Aorta (tissue), 5 donors: ENCODE measurements at regions of chr3 and their contacts with region 1.

Region 1: GRCh38 chr3:13895155-13896105 is 15.6 kb upstream of the WNT7A start:
- DNase-seq: peak; percentile 96 to 99
- ATAC-seq: peak; percentile 98
- H3K4me3 ChIP-seq: peak overlapping the region; percentile 32 to 72
- H3K27ac ChIP-seq: no peak overlapping the region
- H3K4me1 ChIP-seq: no peaks in the 10 kb centered on the region
- H3K27me3 ChIP-seq: no peaks in the 10 kb centered on the region

Region 2: GRCh38 chr3:13836741-13837480 is 58.5 kb before region 1 on chr3:
- intact Hi-C with region 1: no loop called
- DNase-seq: peak in 1 of 2 donors; percentile 40
- ATAC-seq: no peak
- H3K4me3 ChIP-seq: no peak overlapping the region
- H3K27ac ChIP-seq: no peak overlapping the region
- H3K4me1 ChIP-seq: no peaks in the 10 kb centered on the region
- H3K27me3 ChIP-seq: no peaks in the 10 kb centered on the region

Region 3: DNA sequence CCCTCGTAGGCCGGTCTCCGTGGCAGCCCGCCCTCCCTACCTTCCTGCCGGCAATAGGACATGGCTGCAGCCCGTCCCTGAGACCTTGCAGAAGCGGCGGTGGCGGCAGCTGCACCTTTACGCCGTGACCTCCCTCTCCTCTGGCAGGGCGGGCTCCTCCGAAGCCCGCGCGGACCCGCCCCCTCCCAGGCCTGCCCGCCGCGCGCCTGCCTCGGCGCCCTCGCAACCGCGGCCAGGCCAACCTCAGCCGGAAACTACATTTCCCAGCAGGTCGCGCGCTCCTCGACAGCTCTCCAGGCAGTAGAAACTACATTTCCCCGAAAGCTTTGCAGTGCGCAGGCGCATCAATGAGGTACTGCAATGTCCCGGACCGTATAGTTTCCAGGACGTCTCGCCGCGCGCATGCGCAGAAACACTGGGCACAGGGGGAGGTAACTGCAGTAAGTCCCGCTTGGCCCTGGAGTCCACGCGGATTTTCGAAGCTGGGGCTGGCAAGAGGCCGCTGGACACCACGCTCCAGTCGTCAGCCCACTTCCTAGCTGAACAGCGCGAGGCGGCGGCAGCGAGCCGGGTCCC is 229.3 kb after region 1 on chr3 and contains the starts of genes CHCHD4 and TMEM43:
- intact Hi-C with region 1: loop called (anchors 5 kb)
- DNase-seq: peak; percentile 100
- ATAC-seq: peak; percentile 96
- H3K4me3 ChIP-seq: peak within 1 kb of the TSS; percentile 60 to 91
- H3K27ac ChIP-seq: peak within 1 kb of the TSS; percentile 88 to 91
- H3K4me1 ChIP-seq: no peaks in the 10 kb centered on the region
- H3K27me3 ChIP-seq: no peaks in the 10 kb centered on the region
- total RNA-seq, gene CHCHD4: 7.5 to 9.4 TPM
- total RNA-seq, gene TMEM43: 110 to 132 TPM

Region 4: DNA sequence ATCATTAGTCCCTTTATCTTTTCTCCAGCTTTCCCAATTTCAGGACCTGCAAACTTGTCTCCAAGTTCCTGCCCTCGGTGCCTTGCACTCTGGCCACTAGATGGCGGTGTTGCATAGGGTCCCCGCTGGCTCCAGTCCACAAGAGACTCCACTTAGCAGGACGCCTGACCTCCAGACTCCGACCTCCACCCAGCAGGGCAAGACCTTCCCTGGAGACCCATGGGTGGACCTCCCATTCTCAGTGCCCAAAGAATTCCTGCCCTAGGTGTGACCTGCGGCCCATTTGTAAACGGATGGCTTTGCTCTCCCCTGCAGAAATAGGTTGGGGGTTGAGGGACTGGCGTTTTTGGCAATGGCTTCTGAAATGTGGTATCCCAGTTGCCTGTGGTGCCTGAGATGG is 365.8 kb after region 1 on chr3:
- intact Hi-C with region 1: loop called in 1 of 2 experiments (anchors 5 kb)
- DNase-seq: peak; percentile 83 to 94
- ATAC-seq: peak; percentile 86
- H3K4me3 ChIP-seq: no peak overlapping the region
- H3K27ac ChIP-seq: no peak overlapping the region
- H3K4me1 ChIP-seq: no peaks in the 10 kb centered on the region
- H3K27me3 ChIP-seq: no peaks in the 10 kb centered on the region

Region 5: GRCh38 chr3:14467814-14468620 is 572.6 kb after region 1 on chr3:
- intact Hi-C with region 1: loop called in 1 of 2 experiments (anchors 5 kb)
- DNase-seq: no peak
- ATAC-seq: peak; percentile 78
- H3K4me3 ChIP-seq: no peak overlapping the region
- H3K27ac ChIP-seq: no peak overlapping the region
- H3K4me1 ChIP-seq: no peaks in the 10 kb centered on the region
- H3K27me3 ChIP-seq: no peaks in the 10 kb centered on the region

Region 6: GRCh38 chr3:14651440-14652251 is 756.2 kb after region 1 on chr3 and contains the start of gene CCDC174:
- intact Hi-C with region 1: loop called in 1 of 2 experiments (anchors 10 kb)
- DNase-seq: peak; percentile 95 to 96
- ATAC-seq: peak; percentile 100
- H3K4me3 ChIP-seq: peak within 1 kb of the TSS; percentile 72 to 91
- H3K27ac ChIP-seq: peak within 1 kb of the TSS in 1 of 2 donors; percentile 85
- H3K4me1 ChIP-seq: peaks cover 0 to 4% of the 10 kb centered on the region in 2 donors
- H3K27me3 ChIP-seq: no peaks in the 10 kb centered on the region
- total RNA-seq, gene CCDC174: 19.3 to 25.2 TPM